ENCODE measurements at regions of chr2 and their contacts with region 1.

Region 1: GRCh38 chr2:3780477-3781402 is 77.4 kb downstream of the DCDC2C start:
- DNase-seq: peak in 1 of 2 donors; percentile 77
- H3K4me3 ChIP-seq: no peak overlapping the region
- H3K27ac ChIP-seq: no peak overlapping the region
- H3K4me1 ChIP-seq: no peaks in the 10 kb centered on the region
- H3K27me3 ChIP-seq: no peaks in the 10 kb centered on the region
- CTCF ChIP-seq: peak in 2 of 3 experiments; percentile 45 to 66

Region 2: DNA sequence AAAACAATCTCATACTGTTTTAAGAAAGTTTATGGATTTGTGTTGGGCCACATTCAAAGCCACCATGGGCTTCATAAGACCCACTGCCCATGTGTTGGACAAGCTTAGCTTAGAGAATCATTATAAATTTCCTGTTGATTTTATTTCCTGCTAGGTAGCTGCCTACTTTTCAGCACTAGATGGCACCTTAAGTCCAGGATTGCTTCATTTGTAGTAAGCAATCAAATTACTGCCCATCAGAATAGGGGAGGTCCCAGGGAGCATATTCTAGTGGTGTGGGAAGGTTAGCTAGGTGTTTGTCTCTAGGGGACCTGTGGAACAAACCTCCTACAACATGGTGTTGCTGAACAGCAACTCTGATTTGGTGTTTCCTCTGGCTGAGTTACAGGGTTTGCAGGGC is 88.4 kb before region 1 on chr2:
- intact Hi-C with region 1: loop called (anchors 2 kb)
- DNase-seq: no peak
- H3K4me3 ChIP-seq: no peak overlapping the region
- H3K27ac ChIP-seq: no peak overlapping the region
- H3K4me1 ChIP-seq: no peaks in the 10 kb centered on the region
- H3K27me3 ChIP-seq: no peaks in the 10 kb centered on the region
- CTCF ChIP-seq: peak in 2 of 3 experiments; percentile 24 to 54

Region 3: GRCh38 chr2:3728104-3729054 is 52.4 kb before region 1 on chr2:
- intact Hi-C with region 1: loop called (anchors 5 kb)
- DNase-seq: no peak
- H3K4me3 ChIP-seq: peak overlapping the region in 1 of 2 donors; percentile 35
- H3K27ac ChIP-seq: no peak overlapping the region
- H3K4me1 ChIP-seq: no peaks in the 10 kb centered on the region
- H3K27me3 ChIP-seq: no peaks in the 10 kb centered on the region
- CTCF ChIP-seq: peak; percentile 41 to 54 (median 49)

Region 4: GRCh38 chr2:3738454-3738853 is 42.3 kb before region 1 on chr2:
- intact Hi-C with region 1: no loop called
- DNase-seq: no peak
- H3K4me3 ChIP-seq: no peak overlapping the region
- H3K27ac ChIP-seq: no peak overlapping the region
- H3K4me1 ChIP-seq: no peaks in the 10 kb centered on the region
- H3K27me3 ChIP-seq: no peaks in the 10 kb centered on the region
- CTCF ChIP-seq: no peak

Region 5: GRCh38 chr2:3805201-3805939 is 24.6 kb after region 1 on chr2:
- intact Hi-C with region 1: no loop called
- DNase-seq: no peak
- H3K4me3 ChIP-seq: no peak overlapping the region
- H3K27ac ChIP-seq: no peak overlapping the region
- H3K4me1 ChIP-seq: no peaks in the 10 kb centered on the region
- H3K27me3 ChIP-seq: no peaks in the 10 kb centered on the region
- CTCF ChIP-seq: no peak